CD4-positive, alpha-beta memory T cell (primary cell): ENCODE measurements at regions of chr10 and their contacts with region 1.

Region 1: GRCh38 chr10:46284293-46285229 is 2.2 kb upstream of the ANTXRL start:
- DNase-seq: peak; percentile 65 to 81 (median 72)
- H3K4me3 ChIP-seq: peak overlapping the region; percentile 57 to 65
- H3K4me3 Mint-ChIP-seq: peak overlapping the region; percentile 88 to 98 (median 94)
- H3K27ac ChIP-seq: peak overlapping the region; percentile 54
- H3K27ac Mint-ChIP-seq: peak overlapping the region; percentile 37 to 93 (median 83)
- H3K4me1 ChIP-seq: peaks cover 18% of the 10 kb centered on the region
- H3K4me1 Mint-ChIP-seq: peaks cover 11 to 24% (median 16%) of the 10 kb centered on the region in 4 donors
- H3K27me3 ChIP-seq: no peaks in the 10 kb centered on the region
- H3K27me3 Mint-ChIP-seq: no peaks in the 10 kb centered on the region

Region 2: DNA sequence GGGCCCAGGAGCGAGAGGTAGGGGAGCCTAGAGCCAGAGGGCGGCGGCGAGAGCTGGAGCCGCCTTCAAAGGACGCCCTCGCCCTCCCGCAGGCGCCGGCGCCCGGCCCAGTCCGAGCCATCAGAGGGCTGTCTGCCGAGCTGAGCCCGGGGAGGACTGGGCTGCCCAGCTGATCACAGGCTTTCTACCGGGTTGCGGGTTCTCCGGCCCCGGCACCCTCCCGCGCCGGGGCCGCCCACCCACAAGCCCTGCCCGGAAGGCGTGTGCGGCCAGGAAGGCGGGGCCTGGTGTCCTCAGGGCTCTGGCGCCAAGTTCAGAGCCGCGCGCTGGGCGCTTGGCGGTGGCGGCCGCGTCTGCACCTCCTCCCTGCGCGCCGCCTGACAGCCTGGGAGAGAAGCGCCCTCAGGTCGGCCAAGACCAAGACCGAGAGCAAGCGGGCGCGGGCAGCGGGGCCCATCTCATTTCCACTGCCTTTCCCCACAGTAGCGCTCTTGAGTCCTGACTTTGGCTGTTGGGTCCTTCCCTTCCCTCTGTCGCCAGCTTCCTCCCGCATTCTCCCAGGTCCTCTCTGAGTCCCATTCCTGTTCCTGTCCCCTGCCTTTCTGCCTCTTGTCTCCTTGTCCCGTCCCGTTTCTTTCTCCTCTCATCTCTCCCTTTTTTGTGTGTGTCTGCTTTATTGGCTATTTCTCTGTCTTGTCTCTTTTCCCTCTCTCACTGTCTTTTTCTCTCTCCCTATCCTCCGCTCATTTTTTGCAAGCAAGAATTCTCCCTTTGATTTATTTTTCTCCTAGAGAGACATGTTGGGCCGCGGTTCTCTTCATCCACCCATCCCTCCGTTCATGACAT is 177.9 kb before region 1 on chr10:
- CTCF ChIA-PET with region 1: interaction called, 3 read pairs
- POLR2A ChIA-PET with region 1: interaction called, 25 read pairs
- intact Hi-C with region 1: no loop called
- DNase-seq: peak in 4 of 5 donors; percentile 43 to 60 (median 48)
- H3K4me3 ChIP-seq: peak overlapping the region in 1 of 2 donors; percentile 30
- H3K4me3 Mint-ChIP-seq: peak overlapping the region; percentile 78 to 97 (median 92)
- H3K27ac ChIP-seq: peak overlapping the region; percentile 60
- H3K27ac Mint-ChIP-seq: peak overlapping the region in 6 of 7 donors; percentile 9 to 87 (median 51)
- H3K4me1 ChIP-seq: peaks cover 13% of the 10 kb centered on the region
- H3K4me1 Mint-ChIP-seq: peaks cover 13 to 21% (median 15%) of the 10 kb centered on the region in 4 donors
- H3K27me3 ChIP-seq: no peaks in the 10 kb centered on the region
- H3K27me3 Mint-ChIP-seq: peaks cover 2 to 3% of the 10 kb centered on the region in 2 donors

Region 3: GRCh38 chr10:46268076-46268881 is 16.3 kb before region 1 on chr10:
- CTCF ChIA-PET with region 1: interaction called, 6 read pairs
- POLR2A ChIA-PET with region 1: interaction called, 41 read pairs
- intact Hi-C with region 1: loop called (anchors 2 kb)
- DNase-seq: peak; percentile 27 to 76 (median 67)
- H3K4me3 ChIP-seq: peak overlapping the region; percentile 58 to 67
- H3K4me3 Mint-ChIP-seq: no peak overlapping the region
- H3K27ac ChIP-seq: peak overlapping the region; percentile 62
- H3K27ac Mint-ChIP-seq: no peak overlapping the region
- H3K4me1 ChIP-seq: peaks cover 70% of the 10 kb centered on the region
- H3K4me1 Mint-ChIP-seq: peaks cover 33 to 64% (median 42%) of the 10 kb centered on the region in 4 donors
- H3K27me3 ChIP-seq: no peaks in the 10 kb centered on the region
- H3K27me3 Mint-ChIP-seq: no peaks in the 10 kb centered on the region

Region 4: DNA sequence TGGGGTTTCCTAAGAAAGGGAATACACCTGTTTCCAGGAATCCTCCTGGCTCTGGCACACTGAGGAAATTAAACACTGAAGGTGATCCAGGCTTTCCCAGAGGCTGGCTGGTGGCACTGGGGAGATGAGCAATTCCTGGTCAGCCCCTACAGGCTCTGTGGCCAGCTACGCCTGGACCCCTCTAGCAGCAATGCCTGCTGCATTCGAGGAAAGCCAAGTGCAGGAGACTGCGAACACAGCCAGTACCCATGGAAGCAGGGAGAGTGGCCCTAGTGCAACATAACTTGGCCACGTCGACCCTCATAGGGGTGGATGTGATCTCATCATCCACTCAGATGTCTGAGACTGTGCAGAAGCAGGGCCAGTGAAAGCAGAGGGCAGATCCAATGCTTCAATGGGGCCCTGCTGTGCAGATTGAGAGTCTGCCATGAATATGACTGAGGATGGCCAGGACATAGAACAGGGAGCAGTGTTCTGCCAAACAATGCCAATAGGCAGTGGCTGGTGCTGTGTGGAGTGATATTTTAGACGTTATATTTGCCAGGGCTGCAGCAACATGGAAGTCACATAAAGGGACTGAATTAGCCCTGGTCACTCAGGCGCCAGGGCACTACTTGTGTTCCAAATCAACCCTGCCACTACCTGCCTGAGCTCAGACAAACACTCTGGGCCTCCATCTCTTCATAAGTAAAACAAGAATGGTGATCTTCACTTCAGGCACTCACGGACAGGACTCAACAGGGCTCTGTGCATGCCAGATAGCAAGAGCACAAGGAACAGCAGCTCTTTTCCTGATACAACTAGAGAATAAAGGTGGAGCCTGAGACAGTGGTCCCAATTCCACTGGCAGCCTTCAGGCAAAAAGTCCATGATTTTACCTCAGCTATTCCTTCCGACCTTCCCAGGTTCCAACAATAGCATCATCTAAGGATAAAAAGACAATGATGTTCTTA is 1097.1 kb after region 1 on chr10:
- CTCF ChIA-PET with region 1: interaction called, 12 read pairs
- POLR2A ChIA-PET with region 1: interaction called, 6 read pairs
- intact Hi-C with region 1: no loop called
- DNase-seq: no peak
- H3K4me3 ChIP-seq: no peak overlapping the region
- H3K4me3 Mint-ChIP-seq: peak overlapping the region in 1 of 8 donors; percentile 5
- H3K27ac ChIP-seq: no peak overlapping the region
- H3K27ac Mint-ChIP-seq: no peak overlapping the region
- H3K4me1 ChIP-seq: peaks cover 12% of the 10 kb centered on the region
- H3K4me1 Mint-ChIP-seq: peaks cover 12 to 17% (median 15%) of the 10 kb centered on the region in 4 donors
- H3K27me3 ChIP-seq: peaks cover 4% of the 10 kb centered on the region
- H3K27me3 Mint-ChIP-seq: peaks cover 39% of the 10 kb centered on the region in 2 donors